Endothelial cell of umbilical vein (primary cell): ENCODE measurements at regions of chr17 and their contacts with region 1.

Region 1: DNA sequence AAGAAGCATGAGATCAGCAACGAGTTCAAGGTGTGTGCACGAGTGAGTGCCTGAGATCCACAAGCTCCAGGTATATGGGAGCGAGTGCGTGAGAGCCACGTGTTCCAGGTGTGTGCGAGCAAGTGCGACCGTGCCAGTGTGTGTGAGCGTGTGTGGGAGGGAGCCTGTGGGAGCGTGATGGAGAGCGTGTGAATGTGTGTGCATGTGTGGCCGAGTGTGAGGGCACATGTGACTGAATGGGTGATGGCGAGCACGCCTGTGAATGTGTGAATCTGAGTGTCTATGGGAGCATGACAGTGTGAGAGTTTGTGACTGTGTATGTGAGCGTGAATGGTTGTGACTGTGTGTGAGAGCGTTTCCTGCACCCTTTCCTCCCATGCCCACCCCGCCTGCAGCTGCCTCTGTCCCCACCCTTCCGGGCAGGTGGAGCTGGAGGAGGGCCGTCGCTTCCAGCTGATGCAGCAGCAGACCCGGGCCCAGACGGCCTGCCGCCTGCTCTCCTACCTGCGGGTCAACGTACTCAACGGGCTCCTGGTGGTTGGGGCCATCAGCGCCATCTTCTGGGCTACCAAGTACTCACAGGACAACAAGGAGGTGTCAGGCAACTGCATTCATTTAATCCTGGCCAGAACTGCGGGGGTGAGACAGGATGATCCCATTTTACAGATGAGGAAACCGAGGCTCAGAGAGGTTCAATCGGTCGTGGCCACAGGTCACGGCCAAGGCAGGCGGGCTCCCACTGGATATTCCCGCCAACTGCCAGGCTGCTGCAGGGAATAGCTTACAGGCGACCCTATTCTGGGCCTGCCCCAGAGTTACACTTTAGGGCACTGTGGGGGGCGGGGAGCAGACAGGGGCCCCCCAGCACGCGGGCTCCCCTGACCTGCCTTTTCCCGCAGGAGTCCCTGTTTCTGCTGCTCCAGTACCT is 3.7 kb downstream of the TMC8 start:
- DNase-seq: peak; percentile 52
- H3K4me3 ChIP-seq: no peak overlapping the region
- H3K27ac ChIP-seq: no peak overlapping the region
- H3K4me1 ChIP-seq: peaks cover 11% of the 10 kb centered on the region
- H3K27me3 ChIP-seq: no peaks in the 10 kb centered on the region
- CTCF ChIP-seq: peak; percentile 53 to 76
- POLR2A ChIP-seq: no peak

Region 2: DNA sequence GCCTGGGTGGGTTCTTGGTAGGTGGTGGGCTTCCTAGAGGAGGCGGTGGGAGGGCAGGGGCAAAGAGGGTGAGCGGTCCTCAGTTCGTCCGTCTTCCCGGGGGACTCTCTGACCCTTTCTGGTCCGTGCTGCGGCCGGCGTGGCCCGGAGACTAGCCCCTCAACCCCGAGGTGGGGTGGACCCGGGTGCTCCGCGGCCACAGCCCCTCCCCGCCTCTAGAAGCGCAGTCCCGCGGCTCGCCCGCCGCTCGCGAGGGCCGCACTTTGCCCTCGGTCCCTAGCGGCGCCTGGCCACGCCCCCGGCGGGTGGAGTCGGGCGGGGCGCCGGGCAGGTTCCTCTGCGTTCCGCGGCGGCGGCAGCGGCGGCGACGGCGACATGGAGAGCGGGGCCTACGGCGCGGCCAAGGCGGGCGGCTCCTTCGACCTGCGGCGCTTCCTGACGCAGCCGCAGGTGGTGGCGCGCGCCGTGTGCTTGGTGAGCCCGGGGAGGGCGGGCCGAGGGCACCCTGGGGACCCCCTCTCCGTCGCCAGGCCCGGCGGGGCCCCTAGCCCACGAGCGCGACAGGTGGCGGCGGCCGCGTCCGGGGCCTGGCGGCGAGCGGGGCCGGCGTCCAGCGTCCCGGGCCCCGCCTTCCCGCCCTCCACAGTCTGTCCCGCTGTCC is 34.1 kb after region 1 on chr17 and contains the start of gene SYNGR2:
- CTCF ChIA-PET with region 1: no interaction called
- POLR2A ChIA-PET with region 1: no interaction called
- dilution Hi-C with region 1: no loop called
- intact Hi-C with region 1: loop called (anchors 5 kb)
- DNase-seq: peak; percentile 57
- H3K4me3 ChIP-seq: peak within 1 kb of the TSS; percentile 24 to 74 (median 74)
- H3K27ac ChIP-seq: no peak within 1 kb of the TSS
- H3K4me1 ChIP-seq: peaks cover 2% of the 10 kb centered on the region
- H3K27me3 ChIP-seq: no peaks in the 10 kb centered on the region
- CTCF ChIP-seq: no peak
- POLR2A ChIP-seq: peak; percentile 68
- total RNA-seq, gene SYNGR2: 58.6 and 65.9 TPM in 2 replicates